Caco-2 (cell line): ENCODE measurements at regions of chr2 and their contacts with region 1.

Region 1: DNA sequence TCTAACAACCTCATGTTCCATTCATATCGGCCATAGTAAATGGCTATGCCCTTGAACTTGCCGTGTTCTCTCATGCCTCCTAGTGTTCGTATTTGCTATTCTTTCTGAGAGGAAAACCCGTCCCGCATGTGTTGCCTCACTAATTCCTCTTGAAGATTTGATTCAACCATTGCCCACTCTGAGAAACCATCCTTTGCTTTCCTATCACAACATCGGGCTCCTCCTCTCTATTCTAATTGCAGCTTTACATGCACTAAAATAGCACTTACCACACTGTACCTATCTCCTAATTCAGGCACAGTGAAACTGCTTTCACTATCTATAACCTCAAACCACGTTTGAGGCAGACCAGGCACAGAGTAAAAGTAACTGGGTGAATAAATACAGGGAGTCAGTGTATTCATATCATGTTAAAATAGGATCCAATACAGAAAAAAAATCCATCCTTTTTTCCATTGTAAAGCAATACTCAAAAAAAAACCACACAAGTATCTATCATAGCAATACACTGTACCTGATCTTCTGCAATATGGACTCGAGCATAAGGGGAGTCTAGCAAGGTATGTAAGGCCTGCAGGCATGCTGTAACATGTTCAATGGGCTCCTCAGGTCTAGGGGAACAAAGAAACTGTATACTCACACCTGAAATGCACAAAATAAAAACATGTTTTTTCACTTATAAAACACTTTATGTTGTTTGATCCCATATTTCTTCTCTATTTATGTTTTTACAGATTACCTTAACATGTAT is 39.0 kb upstream of the STRN start:
- DNase-seq: peak in 1 of 2 experiments; percentile 56
- H3K4me3 ChIP-seq: no peak overlapping the region
- H3K4me3 Mint-ChIP-seq: no peak overlapping the region
- H3K27ac Mint-ChIP-seq: no peak overlapping the region
- H3K4me1 ChIP-seq: no peaks in the 10 kb centered on the region
- H3K4me1 Mint-ChIP-seq: no peaks in the 10 kb centered on the region
- H3K27me3 ChIP-seq: no peaks in the 10 kb centered on the region
- H3K27me3 Mint-ChIP-seq: no peaks in the 10 kb centered on the region
- CTCF ChIP-seq: peak; percentile 55 to 59

Region 2: GRCh38 chr2:36812196-36812595 is 193.1 kb before region 1 on chr2:
- CTCF ChIA-PET with region 1: no interaction called
- POLR2A ChIA-PET with region 1: no interaction called
- intact Hi-C with region 1: loop called (anchors 1 kb)
- DNase-seq: peak in 1 of 2 experiments; percentile 43
- H3K4me3 ChIP-seq: no peak overlapping the region
- H3K4me3 Mint-ChIP-seq: no peak overlapping the region
- H3K27ac Mint-ChIP-seq: no peak overlapping the region
- H3K4me1 ChIP-seq: no peaks in the 10 kb centered on the region
- H3K4me1 Mint-ChIP-seq: no peaks in the 10 kb centered on the region
- H3K27me3 ChIP-seq: no peaks in the 10 kb centered on the region
- H3K27me3 Mint-ChIP-seq: no peaks in the 10 kb centered on the region
- CTCF ChIP-seq: peak; percentile 19 to 21

Region 3: GRCh38 chr2:36871068-36871707 is 134.1 kb before region 1 on chr2:
- CTCF ChIA-PET with region 1: no interaction called
- POLR2A ChIA-PET with region 1: no interaction called
- intact Hi-C with region 1: loop called (anchors 10 kb)
- DNase-seq: no peak
- H3K4me3 ChIP-seq: no peak overlapping the region
- H3K4me3 Mint-ChIP-seq: no peak overlapping the region
- H3K27ac Mint-ChIP-seq: no peak overlapping the region
- H3K4me1 ChIP-seq: no peaks in the 10 kb centered on the region
- H3K4me1 Mint-ChIP-seq: no peaks in the 10 kb centered on the region
- H3K27me3 ChIP-seq: no peaks in the 10 kb centered on the region
- H3K27me3 Mint-ChIP-seq: no peaks in the 10 kb centered on the region
- CTCF ChIP-seq: no peak